PC-3 (cell line): ENCODE measurements at regions of chr2 and their contacts with region 1.

Region 1: GRCh38 chr2:230902180-230902899 is 22.7 kb downstream of the GPR55 start:
- DNase-seq: peak; percentile 72
- ATAC-seq: peak; percentile 85
- H3K4me3 ChIP-seq: no peak overlapping the region
- H3K27ac ChIP-seq: no peak overlapping the region
- H3K4me1 ChIP-seq: peaks cover 4% of the 10 kb centered on the region; the same call in 1 of the 2 replicates
- H3K27me3 ChIP-seq: no peaks in the 10 kb centered on the region
- CTCF ChIP-seq: peak; percentile 86

Region 2: GRCh38 chr2:230306474-230306873 is 595.9 kb before region 1 on chr2:
- CTCF ChIA-PET with region 1: no interaction called
- POLR2A ChIA-PET with region 1: no interaction called
- intact Hi-C with region 1: no loop called
- DNase-seq: no peak
- ATAC-seq: no peak
- H3K4me3 ChIP-seq: no peak overlapping the region
- H3K27ac ChIP-seq: no peak overlapping the region
- H3K4me1 ChIP-seq: no peaks in the 10 kb centered on the region
- H3K27me3 ChIP-seq: no peaks in the 10 kb centered on the region
- CTCF ChIP-seq: no peak

Region 3: GRCh38 chr2:230864598-230865306 is 37.6 kb before region 1 on chr2 and contains the start of gene ITM2C:
- CTCF ChIA-PET with region 1: no interaction called
- POLR2A ChIA-PET with region 1: no interaction called
- intact Hi-C with region 1: no loop called
- DNase-seq: peak; percentile 76
- ATAC-seq: peak; percentile 84
- H3K4me3 ChIP-seq: peak within 1 kb of the TSS; percentile 97
- H3K27ac ChIP-seq: no peak within 1 kb of the TSS
- H3K4me1 ChIP-seq: peaks cover 12% of the 10 kb centered on the region
- H3K27me3 ChIP-seq: no peaks in the 10 kb centered on the region
- CTCF ChIP-seq: peak; percentile 44; the same call in 1 of the 2 replicates
- total RNA-seq, gene ITM2C: 111 and 113 TPM in 2 replicates

Region 4: DNA sequence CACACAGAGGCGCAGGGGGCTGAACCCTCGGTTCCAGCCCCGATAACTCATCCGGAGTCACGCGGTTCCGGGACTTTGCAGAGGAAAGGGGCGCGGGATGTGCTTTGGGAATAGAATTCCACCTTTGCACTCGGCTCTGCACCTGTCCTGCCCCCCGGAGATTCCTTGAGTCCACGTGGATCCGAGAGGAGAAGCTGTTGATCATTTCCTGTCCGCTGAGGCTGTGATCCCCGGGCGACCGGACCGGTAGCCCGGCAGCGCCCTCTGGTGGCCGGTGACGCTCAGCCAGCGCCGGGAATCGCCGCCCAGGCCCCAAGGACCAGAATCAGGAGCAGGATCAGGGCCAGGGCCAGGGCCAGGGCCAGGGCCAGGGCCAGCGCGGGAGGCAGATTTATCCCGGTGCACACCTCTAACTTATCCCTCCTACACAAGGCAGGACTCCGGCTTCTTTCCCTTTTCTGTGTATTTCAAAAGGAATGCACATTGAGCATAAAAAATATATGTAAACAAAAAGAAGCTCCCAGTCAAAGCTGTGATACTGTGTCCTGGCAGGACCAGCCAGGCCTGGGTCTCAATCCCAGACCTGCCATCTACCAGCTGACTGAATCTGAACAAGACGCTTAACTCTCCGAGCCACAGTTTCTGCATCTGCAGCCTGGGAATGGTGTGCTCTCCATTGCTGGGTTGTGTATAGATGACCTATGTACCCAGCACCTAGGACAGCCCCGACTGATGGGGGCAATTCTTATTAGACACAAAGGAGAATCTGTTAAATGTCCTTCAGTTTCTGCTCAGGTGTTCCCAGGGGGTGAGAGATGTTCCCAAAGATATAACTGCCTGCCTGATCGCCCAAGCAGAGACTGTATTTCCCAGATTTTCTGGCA is 85.0 kb after region 1 on chr2:
- CTCF ChIA-PET with region 1: interaction called, 10 read pairs
- POLR2A ChIA-PET with region 1: no interaction called
- intact Hi-C with region 1: loop called (anchors 1 kb)
- DNase-seq: peak; percentile 78
- ATAC-seq: peak; percentile 98
- H3K4me3 ChIP-seq: peak overlapping the region; percentile 72
- H3K27ac ChIP-seq: no peak overlapping the region
- H3K4me1 ChIP-seq: peaks cover 5% of the 10 kb centered on the region
- H3K27me3 ChIP-seq: no peaks in the 10 kb centered on the region
- CTCF ChIP-seq: peak; percentile 92